PC-9 (cell line): ENCODE measurements at regions of chr7 and their contacts with region 1.

Region 1: DNA sequence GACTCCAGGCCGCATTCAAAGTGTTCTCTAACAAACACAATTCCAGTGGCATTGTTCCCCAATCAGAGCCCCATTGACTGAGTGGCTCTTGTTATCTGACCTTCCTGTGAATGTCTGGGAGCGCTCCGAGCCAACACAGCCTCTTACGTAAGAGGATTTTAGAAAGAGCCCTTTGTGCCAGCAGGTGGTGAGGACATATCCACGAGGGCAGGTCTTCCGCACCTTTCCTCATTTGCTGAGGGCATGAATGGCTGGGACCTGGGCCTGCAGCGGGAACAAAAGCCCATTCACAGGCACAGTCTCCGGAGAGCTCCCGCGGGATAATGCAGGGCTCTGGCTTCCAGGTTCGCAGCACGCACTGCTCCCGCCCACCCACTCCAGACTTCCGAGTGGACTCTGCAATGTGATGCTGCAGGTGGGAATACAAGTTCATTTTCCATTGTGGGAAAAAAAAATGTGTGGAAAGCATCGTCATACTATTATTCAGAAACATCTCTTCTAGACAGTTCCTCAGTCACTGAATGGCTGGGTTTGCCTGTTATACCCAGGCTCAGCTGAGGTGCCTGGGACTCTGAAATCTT is 295.0 kb upstream of the IGFBP3 start:
- DNase-seq: no peak
- H3K4me3 ChIP-seq: no peak overlapping the region
- H3K27ac ChIP-seq: no peak overlapping the region
- H3K4me1 ChIP-seq: peaks cover 22% of the 10 kb centered on the region
- H3K27me3 ChIP-seq: no peaks in the 10 kb centered on the region
- CTCF ChIP-seq: no peak

Region 2: DNA sequence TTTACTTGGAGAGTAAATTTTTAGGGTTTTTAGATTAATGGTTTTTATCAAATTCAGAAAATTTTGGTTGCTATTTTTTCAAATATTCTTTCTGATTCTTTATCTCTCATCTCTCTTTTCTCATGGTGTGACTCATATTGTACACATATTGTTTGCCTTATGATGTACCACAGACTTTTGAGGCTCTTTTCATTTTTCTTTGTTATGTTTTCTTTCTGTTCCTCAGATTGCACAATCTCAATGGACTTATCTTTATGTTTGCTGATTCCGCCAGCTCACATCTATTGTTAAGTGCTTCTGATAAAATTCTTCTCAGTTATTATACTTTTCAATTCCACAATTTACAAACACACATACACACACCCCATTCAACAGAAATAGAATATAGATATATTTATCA is 126.8 kb before region 1 on chr7:
- CTCF ChIA-PET with region 1: no interaction called
- POLR2A ChIA-PET with region 1: no interaction called
- intact Hi-C with region 1: no loop called
- DNase-seq: peak in 1 of 2 experiments; percentile 51
- H3K4me3 ChIP-seq: no peak overlapping the region
- H3K27ac ChIP-seq: no peak overlapping the region
- H3K4me1 ChIP-seq: no peaks in the 10 kb centered on the region
- H3K27me3 ChIP-seq: no peaks in the 10 kb centered on the region
- CTCF ChIP-seq: no peak

Region 3: GRCh38 chr7:46153951-46154787 is 61.9 kb before region 1 on chr7:
- CTCF ChIA-PET with region 1: interaction called, 3 read pairs
- POLR2A ChIA-PET with region 1: interaction called, 15 read pairs
- intact Hi-C with region 1: no loop called
- DNase-seq: peak; percentile 55 to 99
- H3K4me3 ChIP-seq: no peak overlapping the region
- H3K27ac ChIP-seq: peak overlapping the region; percentile 91
- H3K4me1 ChIP-seq: peaks cover 37% of the 10 kb centered on the region
- H3K27me3 ChIP-seq: no peaks in the 10 kb centered on the region
- CTCF ChIP-seq: 0 out of 2 replicates have a peak, but pooled peaks have one; percentile 28

Region 4: GRCh38 chr7:46282155-46282554 is 66.1 kb after region 1 on chr7:
- CTCF ChIA-PET with region 1: no interaction called
- POLR2A ChIA-PET with region 1: no interaction called
- intact Hi-C with region 1: loop called (anchors 1 kb)
- DNase-seq: no peak
- H3K4me3 ChIP-seq: no peak overlapping the region
- H3K27ac ChIP-seq: peak overlapping the region; percentile 83
- H3K4me1 ChIP-seq: peaks cover 31% of the 10 kb centered on the region
- H3K27me3 ChIP-seq: no peaks in the 10 kb centered on the region
- CTCF ChIP-seq: no peak